Activated T-helper 1 cell treated with anti-CD3 and anti-CD28 coated beads, Interleukin-12 subunit alpha, Interleukin-12 subunit beta, Interleukin-2, Interleukin-4 antibody, amounts not matched to agents 30 ng/mL and 10 ng/mL and 1 ng/mL, durations not matched to agents 14 hours and 24 hours and 36 hours (primary cell): ENCODE measurements at regions of chr7 and their contacts with region 1.

Region 1: DNA sequence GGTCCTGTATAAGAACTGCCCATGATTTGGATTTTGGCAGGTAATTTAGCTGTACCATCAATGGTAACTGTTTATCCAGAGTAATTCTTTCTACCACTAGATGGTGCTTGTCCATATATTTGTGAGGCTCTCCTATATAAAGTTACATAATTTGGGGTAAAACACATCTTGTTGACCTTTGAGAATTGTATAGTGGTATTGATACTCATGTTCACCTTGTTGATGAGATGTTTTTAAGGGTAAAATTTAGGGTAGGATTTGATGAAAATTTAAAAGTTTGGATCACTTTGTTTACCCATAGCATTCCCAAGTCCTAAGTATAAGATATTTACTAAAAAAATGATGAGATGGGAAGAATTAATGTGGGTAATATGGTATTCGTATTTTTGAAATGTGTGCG is 31.6 kb downstream of the ST7 start:
- DNase-seq: no peak
- H3K4me3 Mint-ChIP-seq: no peak overlapping the region
- H3K27ac Mint-ChIP-seq: no peak overlapping the region
- H3K4me1 Mint-ChIP-seq: no peaks in the 10 kb centered on the region
- H3K27me3 Mint-ChIP-seq: no peaks in the 10 kb centered on the region

Region 2: DNA sequence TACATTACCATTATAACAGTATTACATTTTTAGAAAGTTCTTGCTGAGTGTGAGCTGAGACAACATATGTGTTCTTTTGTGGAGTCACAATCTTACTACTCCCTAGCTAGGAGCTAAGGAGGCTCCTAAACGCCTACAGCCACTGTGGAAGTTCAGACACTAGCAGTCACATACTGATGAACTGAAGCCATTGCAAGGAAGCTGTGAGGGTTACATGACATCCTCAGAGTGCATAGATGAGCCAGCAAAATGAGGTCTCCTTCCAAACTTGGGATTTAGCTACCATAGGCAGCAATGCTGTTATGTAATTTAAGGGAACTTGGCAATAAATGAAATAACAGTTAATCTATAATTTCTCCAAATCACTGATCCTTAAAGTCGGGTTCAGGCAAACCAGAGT is 42.4 kb before region 1 on chr7:
- intact Hi-C with region 1: no loop called
- DNase-seq: no peak
- H3K4me3 Mint-ChIP-seq: no peak overlapping the region
- H3K27ac Mint-ChIP-seq: no peak overlapping the region
- H3K4me1 Mint-ChIP-seq: no peaks in the 10 kb centered on the region
- H3K27me3 Mint-ChIP-seq: peaks cover 9% of the 10 kb centered on the region

Region 3: GRCh38 chr7:116953727-116954442 is 31.0 kb before region 1 on chr7:
- intact Hi-C with region 1: loop called (anchors 2 kb)
- DNase-seq: no peak
- H3K4me3 Mint-ChIP-seq: peak overlapping the region; percentile 93
- H3K27ac Mint-ChIP-seq: peak overlapping the region; percentile 87
- H3K4me1 Mint-ChIP-seq: peaks cover 12% of the 10 kb centered on the region
- H3K27me3 Mint-ChIP-seq: peaks cover 12% of the 10 kb centered on the region

Region 4: DNA sequence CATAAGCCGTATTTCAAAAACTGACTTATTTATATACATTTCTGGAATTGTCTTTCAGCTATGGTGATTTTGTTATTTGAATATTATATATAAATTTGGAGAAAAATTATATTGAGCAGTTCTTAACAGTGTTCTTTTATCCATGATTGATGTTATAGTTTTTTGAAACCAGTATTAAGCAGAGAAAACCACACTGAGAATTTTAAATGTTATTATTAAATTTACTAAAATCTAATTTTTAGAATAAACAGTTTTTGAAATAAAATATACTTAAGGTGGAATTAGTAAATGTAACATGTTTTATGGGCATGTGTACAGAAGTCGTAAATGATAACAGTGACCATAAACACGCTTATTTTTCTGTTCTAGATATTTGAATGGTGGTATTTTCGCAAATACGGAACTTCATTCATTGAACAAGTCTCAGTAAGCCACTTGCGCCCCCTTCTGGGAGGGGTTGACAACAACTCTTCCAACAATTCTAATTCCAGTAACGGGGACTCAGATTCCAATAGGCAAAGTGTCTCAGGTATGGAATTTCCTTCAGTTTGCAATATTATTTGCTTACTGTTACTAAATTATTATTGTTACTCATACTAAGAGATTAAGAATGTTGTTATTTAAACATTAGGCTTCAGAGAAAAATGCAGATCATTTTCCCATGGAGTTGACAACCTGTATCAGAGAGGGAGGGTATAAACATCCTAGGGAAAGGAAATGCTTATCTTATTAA is 134.4 kb after region 1 on chr7:
- intact Hi-C with region 1: loop called (anchors 1 kb)
- DNase-seq: peak; percentile 42
- H3K4me3 Mint-ChIP-seq: no peak overlapping the region
- H3K27ac Mint-ChIP-seq: no peak overlapping the region
- H3K4me1 Mint-ChIP-seq: no peaks in the 10 kb centered on the region
- H3K27me3 Mint-ChIP-seq: peaks cover 28% of the 10 kb centered on the region

Region 5: DNA sequence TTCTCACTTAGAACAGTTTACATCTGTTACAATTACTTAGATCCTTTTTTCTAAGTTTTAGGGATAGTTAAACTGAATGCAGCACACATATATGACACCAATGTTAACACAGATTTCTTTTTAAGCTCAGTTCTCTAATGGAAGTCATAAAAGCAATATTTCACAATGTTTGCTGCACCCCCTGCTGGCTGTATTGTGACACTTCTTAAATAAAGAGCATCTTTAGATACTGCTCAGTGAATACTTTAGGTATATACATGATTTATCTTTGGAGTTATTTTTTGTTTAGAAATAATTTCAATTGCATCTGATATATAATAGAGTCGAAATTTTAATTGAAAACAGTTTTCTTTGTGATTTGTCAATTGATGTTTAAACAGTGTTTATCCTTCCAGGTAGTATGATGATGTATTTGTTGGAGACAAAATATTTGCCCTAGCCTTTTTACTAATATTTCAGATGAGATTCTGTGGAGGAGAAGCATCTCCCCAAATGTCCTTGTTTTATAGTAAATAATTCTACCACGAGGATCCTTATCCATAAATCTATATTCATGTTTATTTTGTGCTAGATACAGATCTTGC is 142.8 kb after region 1 on chr7:
- intact Hi-C with region 1: loop called (anchors 1 kb)
- DNase-seq: no peak
- H3K4me3 Mint-ChIP-seq: no peak overlapping the region
- H3K27ac Mint-ChIP-seq: no peak overlapping the region
- H3K4me1 Mint-ChIP-seq: no peaks in the 10 kb centered on the region
- H3K27me3 Mint-ChIP-seq: peaks cover 9% of the 10 kb centered on the region